WTC11 (cell line): ENCODE measurements at regions of chr15 and their contacts with region 1.

Region 1: GRCh38 chr15:64825431-64826294 is at the start of gene PIF1:
- DNase-seq: peak; percentile 91
- ATAC-seq: peak; percentile 94
- H3K4me3 Mint-ChIP-seq: peak within 1 kb of the TSS; percentile 92
- H3K27ac Mint-ChIP-seq: peak within 1 kb of the TSS; percentile 92
- H3K4me1 Mint-ChIP-seq: peaks cover 31% of the 10 kb centered on the region
- H3K27me3 Mint-ChIP-seq: no peaks in the 10 kb centered on the region
- CTCF ChIP-seq: no peak
- total RNA-seq, gene PIF1: 174 to 249 TPM (median 184 TPM) in 3 replicates

Region 2: DNA sequence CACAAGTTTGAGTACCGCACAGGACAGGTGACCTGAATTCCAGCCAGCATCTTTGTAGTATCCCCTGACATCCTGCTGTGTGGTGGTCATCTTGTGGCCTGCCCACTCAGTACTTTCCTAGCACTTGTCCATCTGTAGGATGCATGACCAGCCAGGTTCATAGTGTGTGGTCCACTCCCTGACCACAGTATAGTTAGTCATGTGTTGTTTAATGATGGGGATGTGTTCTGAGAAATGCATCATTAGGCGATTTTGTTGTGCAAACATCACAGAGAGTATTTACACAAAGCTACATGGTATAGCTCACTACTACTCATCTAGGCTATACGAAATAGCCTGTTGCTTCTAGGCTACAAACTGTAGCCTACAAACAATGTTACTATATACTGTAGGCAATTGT is 33.4 kb before region 1 on chr15:
- CTCF ChIA-PET with region 1: no interaction called
- POLR2A ChIA-PET with region 1: no interaction called
- DNase-seq: no peak
- ATAC-seq: no peak
- H3K4me3 Mint-ChIP-seq: no peak overlapping the region
- H3K27ac Mint-ChIP-seq: no peak overlapping the region
- H3K4me1 Mint-ChIP-seq: peaks cover 3% of the 10 kb centered on the region; the same call in 1 of the 2 replicates
- H3K27me3 Mint-ChIP-seq: no peaks in the 10 kb centered on the region
- CTCF ChIP-seq: no peak

Region 3: DNA sequence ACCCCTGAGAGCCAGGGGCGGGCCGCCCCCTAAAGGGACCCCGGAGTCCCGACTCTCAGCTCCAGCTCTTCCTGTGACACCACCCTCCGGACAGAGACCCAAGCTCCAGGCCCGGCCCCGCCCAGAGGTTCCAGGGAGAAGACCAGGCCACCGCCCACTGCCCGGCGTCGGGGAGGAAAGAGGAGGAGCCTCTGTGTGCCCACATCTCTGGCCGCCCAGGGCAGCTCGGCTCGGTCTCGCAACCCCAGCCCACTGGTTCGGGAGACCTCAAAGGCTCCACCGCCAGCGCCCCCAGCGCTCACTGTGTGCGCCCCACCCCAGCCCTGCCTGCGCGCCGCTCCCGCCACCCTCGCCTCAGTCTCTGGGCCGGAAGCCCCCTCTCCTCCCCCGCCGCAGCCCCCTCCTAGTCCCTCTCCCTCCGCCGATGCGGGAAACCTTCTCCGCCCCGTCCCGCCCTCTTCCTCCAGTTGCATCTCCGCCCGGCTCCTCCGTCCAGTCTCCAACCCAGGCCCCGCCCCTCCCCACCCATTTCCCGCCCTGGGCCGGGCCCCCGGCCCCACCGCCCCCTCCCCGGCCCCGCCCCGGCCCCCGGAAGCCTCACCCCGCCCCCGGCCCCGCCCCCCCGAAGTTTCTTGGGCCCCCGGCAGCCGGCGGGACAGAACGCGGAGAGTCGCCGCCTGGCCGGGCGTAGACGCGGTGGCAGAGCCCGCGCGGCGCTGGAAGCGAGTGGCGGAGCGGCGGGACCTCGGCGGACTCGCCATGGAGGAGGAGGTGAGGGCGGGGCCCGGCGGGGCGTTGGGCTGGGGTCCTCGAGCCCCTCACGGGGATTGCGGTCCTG is 15.8 kb after region 1 on chr15 and contains the start of gene PLEKHO2:
- CTCF ChIA-PET with region 1: interaction called, 9 read pairs
- POLR2A ChIA-PET with region 1: interaction called, 10 read pairs
- DNase-seq: peak; percentile 98
- ATAC-seq: peak; percentile 89
- H3K4me3 Mint-ChIP-seq: peak within 1 kb of the TSS; percentile 91
- H3K27ac Mint-ChIP-seq: peak within 1 kb of the TSS; percentile 86
- H3K4me1 Mint-ChIP-seq: peaks cover 68% of the 10 kb centered on the region
- H3K27me3 Mint-ChIP-seq: no peaks in the 10 kb centered on the region
- CTCF ChIP-seq: no peak
- total RNA-seq, gene PLEKHO2: 21.6 to 22.1 TPM (median 21.9 TPM) in 3 replicates